A549 (cell line): ENCODE measurements at regions of chr3 and their contacts with region 1.

Region 1: GRCh38 chr3:106609666-106610301 is 741.0 kb upstream of the CBLB start:
- DNase-seq: peak; percentile 12 to 76
- ATAC-seq: peak; percentile 82 to 89; a peak in 4 of 6 replicates
- H3K4me3 ChIP-seq: no peak overlapping the region
- H3K27ac ChIP-seq: peak overlapping the region; percentile 53 to 55; a peak in 5 of 6 replicates
- H3K4me1 ChIP-seq: peaks cover 13% of the 10 kb centered on the region; the same call in 2 of the 3 replicates
- CTCF ChIP-seq: peak; percentile 88
- EP300 ChIP-seq: no peak
- POLR2A ChIP-seq: no peak
- RAD21 ChIP-seq: peak; percentile 94 to 96

Region 2: GRCh38 chr3:105688821-105689220 is 921.0 kb before region 1 on chr3:
- CTCF ChIA-PET with region 1: interaction called, 10 read pairs
- POLR2A ChIA-PET with region 1: no interaction called
- DNase-seq: peak; percentile 1 to 76
- ATAC-seq: peak; percentile 73 to 97; a peak in 4 of 6 replicates
- H3K4me3 ChIP-seq: no peak overlapping the region
- H3K27ac ChIP-seq: peak overlapping the region; percentile 45 to 58; a peak in 3 of 6 replicates
- H3K4me1 ChIP-seq: peaks cover 33% of the 10 kb centered on the region
- CTCF ChIP-seq: no peak
- EP300 ChIP-seq: no peak
- POLR2A ChIP-seq: no peak
- RAD21 ChIP-seq: no peak; a peak in 1 of 5 replicates

Region 3: DNA sequence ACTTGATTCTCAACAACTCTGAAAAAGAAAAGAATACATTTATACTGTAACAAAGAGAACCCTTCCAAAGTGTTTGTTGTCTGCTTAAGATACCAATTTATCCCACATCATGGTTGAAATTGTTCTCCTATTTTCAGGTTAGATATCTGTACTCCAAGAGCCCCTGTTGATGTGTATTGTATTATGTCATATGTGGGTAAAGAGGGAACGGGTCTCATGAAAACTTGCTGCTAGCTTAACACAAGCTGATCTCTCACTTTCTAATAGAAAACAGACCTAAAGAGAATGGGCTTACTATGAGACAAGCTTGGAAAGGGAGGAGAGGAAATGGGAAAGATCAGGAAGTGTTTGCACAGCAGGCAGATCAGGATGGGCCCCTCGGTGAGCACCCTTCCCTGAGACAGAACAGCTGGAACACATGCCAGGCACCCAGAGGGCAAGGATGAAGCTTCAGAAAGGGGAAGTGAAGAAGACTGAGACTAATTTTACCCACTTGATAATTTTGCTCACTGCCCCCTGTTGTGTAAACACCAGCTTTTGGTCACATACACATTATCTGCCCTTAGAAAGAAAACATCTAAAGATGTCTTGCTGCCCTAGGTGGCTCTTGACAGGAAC is 19.5 kb after region 1 on chr3:
- CTCF ChIA-PET with region 1: interaction called, 10 read pairs
- POLR2A ChIA-PET with region 1: no interaction called
- DNase-seq: no peak
- ATAC-seq: no peak
- H3K4me3 ChIP-seq: no peak overlapping the region
- H3K27ac ChIP-seq: no peak overlapping the region
- H3K4me1 ChIP-seq: no peaks in the 10 kb centered on the region
- CTCF ChIP-seq: no peak
- EP300 ChIP-seq: no peak
- POLR2A ChIP-seq: no peak
- RAD21 ChIP-seq: no peak

Region 4: GRCh38 chr3:107064445-107065060 is 454.8 kb after region 1 on chr3:
- CTCF ChIA-PET with region 1: interaction called, 11 read pairs
- POLR2A ChIA-PET with region 1: no interaction called
- DNase-seq: peak; percentile 62 to 69
- ATAC-seq: peak; percentile 88 to 93
- H3K4me3 ChIP-seq: no peak overlapping the region
- H3K27ac ChIP-seq: no peak overlapping the region
- H3K4me1 ChIP-seq: 0 out of 3 replicates have a peak, but pooled peaks cover 11% of the 10 kb centered on the region
- CTCF ChIP-seq: peak; percentile 87
- EP300 ChIP-seq: no peak
- POLR2A ChIP-seq: no peak
- RAD21 ChIP-seq: peak; percentile 83 to 86